PC-9 (cell line): ENCODE measurements at regions of chr9 and their contacts with region 1.

Region 1: GRCh38 chr9:22452415-22453010 is 5.9 kb downstream of the DMRTA1 start:
- DNase-seq: peak in 1 of 2 experiments; percentile 27
- H3K4me3 ChIP-seq: no peak overlapping the region
- H3K27ac ChIP-seq: no peak overlapping the region
- H3K4me1 ChIP-seq: peaks cover 12% of the 10 kb centered on the region; the same call in 1 of the 2 replicates
- H3K27me3 ChIP-seq: no peaks in the 10 kb centered on the region
- CTCF ChIP-seq: peak; percentile 82

Region 2: DNA sequence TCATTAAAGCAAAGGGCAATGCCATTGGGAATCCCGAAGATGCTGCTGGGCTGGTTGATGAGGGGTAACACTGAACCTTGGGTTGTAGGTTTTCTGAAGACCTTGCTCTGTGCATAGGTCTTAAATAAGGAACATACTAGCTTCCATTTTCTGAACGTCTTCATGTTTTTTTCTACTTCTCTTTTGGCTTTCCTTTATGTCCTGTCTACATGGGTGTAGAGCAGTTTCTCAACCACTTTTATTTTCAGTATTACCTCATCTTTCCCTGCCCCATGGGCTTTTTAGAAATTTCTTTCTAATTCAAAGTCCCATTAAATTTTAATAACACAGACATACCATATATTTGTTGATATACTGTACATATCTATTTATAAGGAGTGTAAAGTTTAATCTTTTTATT is 1212.6 kb before region 1 on chr9 and contains the start of gene IFNA14:
- CTCF ChIA-PET with region 1: interaction called, 3 read pairs
- POLR2A ChIA-PET with region 1: no interaction called
- intact Hi-C with region 1: loop called (anchors 10 kb)
- DNase-seq: no peak
- H3K4me3 ChIP-seq: no peak within 1 kb of the TSS
- H3K27ac ChIP-seq: no peak within 1 kb of the TSS
- H3K4me1 ChIP-seq: no peaks in the 10 kb centered on the region
- H3K27me3 ChIP-seq: no peaks in the 10 kb centered on the region
- CTCF ChIP-seq: no peak
- total RNA-seq, gene IFNA14: not detected in 2 replicates

Region 3: DNA sequence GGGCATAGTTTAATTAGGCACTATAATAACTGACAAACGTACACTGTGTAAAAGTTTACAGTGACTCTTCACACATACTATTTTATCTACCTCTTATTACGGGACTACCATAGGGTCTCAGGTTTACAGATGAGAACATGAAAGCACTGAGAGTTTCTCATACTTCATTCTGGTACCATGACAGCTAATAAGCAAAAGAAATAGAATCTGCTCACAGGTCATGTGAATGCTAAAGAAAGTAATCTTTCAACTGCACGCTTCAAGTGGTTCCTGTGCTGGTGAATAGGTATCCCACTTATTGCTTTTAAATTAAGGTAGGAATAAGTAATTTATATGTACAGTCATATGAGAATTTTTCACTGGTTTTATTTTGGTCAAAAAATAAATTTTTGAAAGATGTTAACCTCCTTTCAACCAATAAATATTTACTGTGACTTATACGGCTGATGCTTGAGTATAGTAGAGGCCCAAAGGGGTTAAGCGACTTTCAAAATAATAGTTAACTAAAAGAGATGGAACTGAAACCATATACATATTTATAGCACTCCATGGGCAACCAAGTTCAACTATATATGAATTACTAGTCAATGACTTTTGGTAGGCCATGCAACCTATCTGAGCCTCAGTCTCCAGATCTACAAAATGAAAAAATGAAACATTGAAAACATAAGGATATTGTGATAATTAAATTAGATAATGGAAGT is 466.4 kb before region 1 on chr9:
- CTCF ChIA-PET with region 1: no interaction called
- POLR2A ChIA-PET with region 1: no interaction called
- intact Hi-C with region 1: loop called (anchors 10 kb)
- DNase-seq: no peak
- H3K4me3 ChIP-seq: no peak overlapping the region
- H3K27ac ChIP-seq: no peak overlapping the region
- H3K4me1 ChIP-seq: peaks cover 18% of the 10 kb centered on the region; the same call in 1 of the 2 replicates
- H3K27me3 ChIP-seq: no peaks in the 10 kb centered on the region
- CTCF ChIP-seq: no peak

Region 4: GRCh38 chr9:22307013-22307711 is 145.4 kb before region 1 on chr9:
- CTCF ChIA-PET with region 1: interaction called, 9 read pairs
- POLR2A ChIA-PET with region 1: no interaction called
- intact Hi-C with region 1: loop called (anchors 1 kb)
- DNase-seq: peak; percentile 7 to 40
- H3K4me3 ChIP-seq: no peak overlapping the region
- H3K27ac ChIP-seq: no peak overlapping the region
- H3K4me1 ChIP-seq: no peaks in the 10 kb centered on the region
- H3K27me3 ChIP-seq: no peaks in the 10 kb centered on the region
- CTCF ChIP-seq: peak; percentile 75

Region 5: GRCh38 chr9:22469928-22470544 is 17.5 kb after region 1 on chr9:
- CTCF ChIA-PET with region 1: no interaction called
- POLR2A ChIA-PET with region 1: no interaction called
- intact Hi-C with region 1: no loop called
- DNase-seq: peak in 1 of 2 experiments; percentile 10
- H3K4me3 ChIP-seq: no peak overlapping the region
- H3K27ac ChIP-seq: no peak overlapping the region
- H3K4me1 ChIP-seq: no peaks in the 10 kb centered on the region
- H3K27me3 ChIP-seq: no peaks in the 10 kb centered on the region
- CTCF ChIP-seq: peak; percentile 78